Activated naive CD4-positive, alpha-beta T cell treated with anti-CD3 and anti-CD28 coated beads for 36 hours (primary cell): ENCODE measurements at regions of chr9 and their contacts with region 1.

Region 1: DNA sequence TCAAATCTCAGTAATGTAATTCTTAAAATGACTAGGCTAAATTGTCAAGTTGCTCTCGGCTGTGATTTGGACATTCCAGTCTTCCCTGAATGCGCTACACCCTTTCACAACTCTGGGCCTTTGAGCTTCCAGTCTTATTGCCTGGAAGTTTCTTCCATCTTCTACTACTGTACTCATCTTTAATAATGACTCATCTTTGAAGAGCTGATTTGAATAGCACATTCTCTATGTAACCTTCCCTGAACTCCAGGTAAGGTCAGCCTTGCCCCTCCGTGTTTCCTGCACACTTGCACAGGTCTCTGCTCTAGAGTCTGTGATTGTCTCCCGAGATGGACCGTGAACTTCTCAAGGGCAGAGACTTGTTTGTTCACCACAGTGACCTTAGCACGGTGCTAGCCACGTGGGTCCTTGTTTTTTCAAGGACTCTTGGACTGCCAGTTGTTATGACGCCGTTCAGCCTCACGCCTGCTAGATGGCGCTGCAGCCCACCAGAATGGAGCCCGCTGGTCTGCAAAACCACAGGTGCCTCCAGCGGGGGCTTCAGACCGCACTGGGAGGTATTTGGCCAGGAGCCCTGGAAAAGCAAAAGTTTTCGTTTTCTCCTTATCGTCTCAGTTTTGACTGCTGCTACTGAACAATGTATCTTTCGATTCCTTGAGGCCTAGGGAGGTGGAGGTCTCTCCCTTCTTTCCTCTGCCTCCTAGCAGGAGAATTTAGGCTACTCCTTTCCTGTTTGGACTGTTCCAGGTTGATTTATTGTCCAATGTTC is 44.4 kb downstream of the SEC61B start:
- DNase-seq: peak; percentile 82
- H3K4me3 Mint-ChIP-seq: peak overlapping the region; percentile 19
- H3K27ac Mint-ChIP-seq: no peak overlapping the region
- H3K4me1 Mint-ChIP-seq: peaks cover 17% of the 10 kb centered on the region
- H3K27me3 Mint-ChIP-seq: peaks cover 1% of the 10 kb centered on the region

Region 2: GRCh38 chr9:99162759-99163364 is 103.6 kb before region 1 on chr9:
- CTCF ChIA-PET with region 1: interaction called, 7 read pairs
- intact Hi-C with region 1: loop called (anchors 1 kb)
- DNase-seq: no peak
- H3K4me3 Mint-ChIP-seq: no peak overlapping the region
- H3K27ac Mint-ChIP-seq: no peak overlapping the region
- H3K4me1 Mint-ChIP-seq: peaks cover 15% of the 10 kb centered on the region
- H3K27me3 Mint-ChIP-seq: peaks cover 12% of the 10 kb centered on the region

Region 3: DNA sequence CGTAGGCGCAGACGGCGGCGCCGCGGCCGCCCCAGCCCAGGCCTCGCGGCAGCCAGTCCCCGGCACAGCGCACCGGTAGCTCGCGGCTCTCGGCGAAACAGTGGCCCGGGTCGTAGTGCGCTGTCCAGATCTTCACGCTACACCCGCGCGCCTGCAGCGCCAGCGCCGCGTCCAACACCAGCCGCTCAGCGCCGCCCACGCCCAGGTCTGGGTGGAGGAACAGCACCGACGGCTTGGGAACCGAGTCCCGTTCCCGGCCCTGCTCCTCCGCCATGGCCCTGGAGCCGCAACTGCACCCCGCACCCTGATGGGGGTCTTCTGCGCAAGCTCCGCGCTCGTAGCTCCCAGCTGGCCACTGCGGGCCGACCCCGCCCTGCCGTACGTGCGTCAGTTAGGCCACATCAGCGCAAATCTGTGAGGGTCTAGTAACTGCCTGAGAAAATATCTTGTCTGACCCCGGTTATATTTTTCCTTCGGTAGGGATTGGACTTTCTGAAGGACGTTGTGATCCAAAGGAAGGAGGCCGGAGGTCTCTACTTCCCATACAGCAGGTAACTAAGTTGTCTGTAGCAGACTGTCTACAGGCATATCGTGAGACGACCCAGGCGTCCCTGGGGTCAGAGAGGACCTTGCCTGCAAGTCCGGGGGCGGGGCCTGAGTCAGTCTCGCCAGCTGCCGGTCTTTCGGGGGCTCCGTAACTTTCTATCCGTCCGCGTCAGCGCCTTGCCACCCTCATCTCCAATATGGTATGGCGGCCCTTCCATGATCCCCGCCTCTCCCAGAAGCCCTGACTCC is 44.6 kb before region 1 on chr9 and contains the starts of genes ALG2 and SEC61B:
- CTCF ChIA-PET with region 1: no interaction called
- intact Hi-C with region 1: loop called (anchors 1 kb)
- DNase-seq: peak; percentile 94
- H3K4me3 Mint-ChIP-seq: peak within 1 kb of the TSS; percentile 97
- H3K27ac Mint-ChIP-seq: peak within 1 kb of the TSS; percentile 98
- H3K4me1 Mint-ChIP-seq: peaks cover 56% of the 10 kb centered on the region
- H3K27me3 Mint-ChIP-seq: no peaks in the 10 kb centered on the region
- total RNA-seq, gene ALG2: 11.3 to 11.8 TPM
- total RNA-seq, gene SEC61B: 105 TPM